ENCODE measurements at regions of chr1 and their contacts with region 1.

Region 1: DNA sequence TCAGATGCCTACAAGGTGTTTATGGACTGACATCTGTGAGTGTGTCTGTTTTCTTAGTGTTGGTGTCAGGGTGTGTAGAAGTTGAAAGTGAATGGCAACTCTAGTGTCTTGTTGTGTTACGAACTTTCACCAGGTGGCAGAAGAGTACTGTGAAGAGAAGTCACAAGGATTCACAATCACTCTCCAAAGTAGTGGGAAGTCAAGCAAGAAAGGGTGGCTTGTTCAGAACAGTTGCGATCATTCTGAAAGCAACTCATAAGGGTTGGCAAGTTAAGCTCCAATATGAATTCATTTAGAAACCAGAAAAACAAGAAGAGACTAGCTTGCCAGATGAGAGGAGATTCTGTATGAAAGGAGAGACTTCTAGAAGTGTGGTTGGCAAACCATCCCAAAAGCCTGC is 86.1 kb downstream of the FASLG start:
- DNase-seq: no peak
- H3K4me3 Mint-ChIP-seq: no peak overlapping the region
- H3K27ac Mint-ChIP-seq: peak overlapping the region; percentile 18
- H3K4me1 Mint-ChIP-seq: peaks cover 26% of the 10 kb centered on the region
- H3K27me3 Mint-ChIP-seq: peaks cover 49% of the 10 kb centered on the region

Region 2: DNA sequence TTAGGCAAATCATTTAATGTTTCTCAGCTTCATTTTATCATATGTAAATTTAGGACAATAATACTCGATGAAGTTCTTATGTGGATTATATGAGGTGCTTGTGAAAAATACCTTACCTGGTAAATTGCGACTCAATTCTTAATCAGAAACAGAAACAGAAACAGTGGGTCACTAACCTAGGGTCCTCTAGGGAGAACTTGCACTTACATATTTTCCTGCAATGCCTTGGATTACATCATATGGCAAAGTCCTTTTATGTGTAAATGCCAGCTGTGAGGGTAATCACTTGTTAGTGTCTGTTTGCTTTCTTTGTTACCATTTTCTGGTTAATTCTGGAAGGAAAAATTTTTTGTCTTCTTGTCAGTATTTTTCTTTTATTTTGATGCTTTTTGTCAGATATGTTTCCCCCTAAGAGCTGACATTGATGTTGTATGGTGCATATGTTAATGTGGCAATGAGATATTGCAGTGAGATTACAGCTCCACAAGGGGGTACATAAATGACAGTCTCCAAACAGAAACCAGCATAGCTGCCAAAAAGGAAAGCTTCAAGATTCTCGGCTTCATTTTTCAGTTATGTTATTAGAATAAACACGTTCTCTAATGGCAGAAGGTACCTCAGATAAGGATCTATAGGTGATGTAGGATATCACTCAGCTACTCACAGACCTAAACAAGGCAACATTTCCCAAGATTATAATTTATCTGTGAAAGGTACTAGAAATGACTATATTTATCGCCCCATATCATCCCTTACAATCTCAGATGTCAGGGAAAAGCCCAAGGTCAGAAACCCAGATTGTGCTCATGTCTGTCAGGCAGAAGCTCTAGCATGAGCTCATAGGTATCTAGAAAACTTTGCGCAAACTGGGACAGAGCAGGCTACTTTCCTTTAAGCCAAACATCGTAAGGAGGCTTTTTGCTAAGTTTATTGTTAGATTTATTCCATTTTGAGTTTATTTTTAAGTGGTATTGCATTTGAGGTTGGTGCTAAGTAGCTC is 33.7 kb after region 1 on chr1:
- intact Hi-C with region 1: loop called (anchors 2 kb)
- DNase-seq: no peak
- H3K4me3 Mint-ChIP-seq: no peak overlapping the region
- H3K27ac Mint-ChIP-seq: no peak overlapping the region
- H3K4me1 Mint-ChIP-seq: peaks cover 16% of the 10 kb centered on the region
- H3K27me3 Mint-ChIP-seq: peaks cover 31% of the 10 kb centered on the region

Region 3: DNA sequence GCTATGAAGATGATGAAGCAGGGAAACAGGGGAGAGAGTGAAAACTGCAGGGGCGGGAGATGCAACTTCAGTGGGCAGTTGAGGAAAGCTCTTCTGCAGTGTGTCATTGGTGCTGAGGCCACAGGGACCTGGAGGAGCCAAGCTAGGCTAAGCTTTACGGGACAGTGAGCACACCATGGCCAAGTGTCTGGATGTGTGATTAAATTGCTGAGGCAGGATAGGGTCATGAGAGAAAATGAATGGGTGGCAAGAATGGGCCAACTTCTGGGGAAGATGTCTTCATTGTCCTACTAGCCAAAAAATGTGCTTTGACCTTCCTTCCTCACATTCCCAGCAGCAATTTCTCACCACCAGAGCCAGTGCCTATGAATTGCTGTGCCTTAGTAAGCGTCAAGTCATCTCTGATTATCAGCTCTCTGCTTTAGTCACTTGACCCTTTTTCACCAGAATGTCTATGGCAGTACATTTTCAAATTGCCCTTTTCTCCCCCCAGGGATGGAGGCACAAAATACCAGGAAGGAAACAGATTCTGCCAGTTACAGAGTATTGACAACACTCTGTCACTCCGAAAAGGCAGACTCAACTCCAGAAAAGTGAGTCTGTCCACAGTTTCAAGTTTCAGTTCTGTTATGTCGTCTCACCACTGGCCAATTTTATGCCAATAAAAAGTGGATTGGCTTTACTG is 138.2 kb after region 1 on chr1:
- intact Hi-C with region 1: loop called (anchors 5 kb)
- DNase-seq: no peak
- H3K4me3 Mint-ChIP-seq: no peak overlapping the region
- H3K27ac Mint-ChIP-seq: peak overlapping the region; percentile 18
- H3K4me1 Mint-ChIP-seq: peaks cover 19% of the 10 kb centered on the region
- H3K27me3 Mint-ChIP-seq: peaks cover 67% of the 10 kb centered on the region

Region 4: DNA sequence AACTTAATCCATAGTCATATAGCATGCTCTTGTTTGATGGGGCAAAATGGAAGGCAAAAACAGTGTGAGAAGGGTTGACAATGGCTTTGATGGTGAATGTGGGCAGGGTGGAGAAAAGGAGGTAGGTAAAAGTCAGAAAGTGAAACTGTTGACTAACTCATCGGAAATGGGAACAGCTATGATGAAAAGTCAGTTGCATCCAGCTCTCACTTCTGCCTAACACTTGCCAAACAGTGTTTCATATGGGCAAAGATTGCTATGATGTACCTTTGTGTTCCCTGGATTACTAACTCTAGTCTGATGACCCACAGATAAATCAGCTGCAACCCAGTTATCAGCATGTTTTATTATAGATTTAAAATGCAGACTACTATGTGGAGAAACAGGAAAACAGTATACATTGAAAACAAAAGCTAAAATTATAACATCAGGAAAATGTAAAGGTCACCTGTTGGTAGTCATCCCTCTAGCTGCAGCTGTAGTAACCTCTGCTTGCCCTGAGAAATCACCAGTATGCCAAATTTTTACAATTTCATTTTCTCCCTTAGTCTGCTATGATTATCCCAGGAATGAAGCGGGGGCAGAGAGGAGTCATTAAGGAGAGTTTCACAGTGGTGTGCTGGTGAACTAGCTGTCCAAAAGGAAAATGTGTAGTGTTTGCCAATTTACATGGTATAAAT is 294.0 kb after region 1 on chr1:
- intact Hi-C with region 1: loop called (anchors 10 kb)
- DNase-seq: no peak
- H3K4me3 Mint-ChIP-seq: no peak overlapping the region
- H3K27ac Mint-ChIP-seq: no peak overlapping the region
- H3K4me1 Mint-ChIP-seq: peaks cover 19% of the 10 kb centered on the region
- H3K27me3 Mint-ChIP-seq: peaks cover 6% of the 10 kb centered on the region

Region 5: GRCh38 chr1:173297798-173298391 is 552.9 kb after region 1 on chr1:
- intact Hi-C with region 1: loop called (anchors 1 kb)
- DNase-seq: no peak
- H3K4me3 Mint-ChIP-seq: no peak overlapping the region
- H3K27ac Mint-ChIP-seq: peak overlapping the region; percentile 2
- H3K4me1 Mint-ChIP-seq: peaks cover 28% of the 10 kb centered on the region
- H3K27me3 Mint-ChIP-seq: peaks cover 37% of the 10 kb centered on the region

Region 6: DNA sequence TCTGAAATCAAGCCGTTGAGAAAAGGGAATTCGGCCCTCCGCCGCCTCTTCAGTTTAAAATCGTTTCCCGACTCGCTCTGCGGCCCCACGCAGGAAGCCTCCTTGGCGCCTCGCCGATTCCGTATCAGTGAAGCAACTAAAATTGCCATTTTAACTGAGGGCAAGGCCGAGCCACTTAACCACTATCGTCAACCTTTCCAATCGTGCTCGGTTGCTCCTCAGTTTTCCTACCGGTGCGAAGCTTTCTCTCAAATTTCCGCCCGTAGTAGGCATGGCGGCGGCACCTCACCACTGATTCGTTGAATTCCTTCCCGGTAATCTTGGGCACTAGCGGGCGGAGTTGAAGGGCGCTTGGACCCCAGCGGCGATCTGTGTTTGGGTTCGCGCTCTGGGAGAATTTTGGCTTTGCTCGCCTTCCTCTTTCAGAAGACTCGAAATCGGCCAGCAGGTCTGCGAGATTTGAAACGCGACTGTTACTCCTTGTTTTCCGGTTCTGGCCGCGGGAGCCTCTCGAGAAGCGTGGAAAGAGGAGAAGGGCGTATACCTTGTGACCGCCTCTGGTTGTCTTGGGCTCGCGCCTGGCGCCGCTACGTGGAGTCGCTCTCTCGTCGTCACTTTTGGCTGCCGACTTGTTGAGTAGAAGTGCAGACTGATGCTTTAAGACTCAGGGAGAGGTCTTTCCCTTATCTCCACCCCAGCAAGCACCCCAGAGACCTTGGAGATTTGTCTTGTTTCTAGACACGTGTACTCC is 1079.5 kb after region 1 on chr1 and contains the starts of genes CENPL and DARS2:
- intact Hi-C with region 1: loop called (anchors 2 kb)
- DNase-seq: peak; percentile 91
- H3K4me3 Mint-ChIP-seq: peak within 1 kb of the TSS; percentile 98
- H3K27ac Mint-ChIP-seq: peak within 1 kb of the TSS; percentile 99
- H3K4me1 Mint-ChIP-seq: peaks cover 36% of the 10 kb centered on the region
- H3K27me3 Mint-ChIP-seq: no peaks in the 10 kb centered on the region
- total RNA-seq, gene CENPL: 26.1 and 26.2 TPM in 2 replicates
- total RNA-seq, gene DARS2: 49.7 and 49.9 TPM in 2 replicates